Activated T-helper 1 cell treated with anti-CD3 and anti-CD28 coated beads, Interleukin-12 subunit alpha, Interleukin-12 subunit beta, Interleukin-2, Interleukin-4 antibody, amounts not matched to agents 30 ng/mL and 10 ng/mL and 1 ng/mL, durations not matched to agents 14 hours and 24 hours and 36 hours (primary cell): ENCODE measurements at regions of chr14 and their contacts with region 1.

Region 1: GRCh38 chr14:89973234-89973823 is 17.6 kb downstream of the TDP1 start:
- DNase-seq: peak; percentile 25
- H3K4me3 Mint-ChIP-seq: no peak overlapping the region
- H3K27ac Mint-ChIP-seq: no peak overlapping the region
- H3K4me1 Mint-ChIP-seq: peaks cover 5% of the 10 kb centered on the region
- H3K27me3 Mint-ChIP-seq: no peaks in the 10 kb centered on the region

Region 2: DNA sequence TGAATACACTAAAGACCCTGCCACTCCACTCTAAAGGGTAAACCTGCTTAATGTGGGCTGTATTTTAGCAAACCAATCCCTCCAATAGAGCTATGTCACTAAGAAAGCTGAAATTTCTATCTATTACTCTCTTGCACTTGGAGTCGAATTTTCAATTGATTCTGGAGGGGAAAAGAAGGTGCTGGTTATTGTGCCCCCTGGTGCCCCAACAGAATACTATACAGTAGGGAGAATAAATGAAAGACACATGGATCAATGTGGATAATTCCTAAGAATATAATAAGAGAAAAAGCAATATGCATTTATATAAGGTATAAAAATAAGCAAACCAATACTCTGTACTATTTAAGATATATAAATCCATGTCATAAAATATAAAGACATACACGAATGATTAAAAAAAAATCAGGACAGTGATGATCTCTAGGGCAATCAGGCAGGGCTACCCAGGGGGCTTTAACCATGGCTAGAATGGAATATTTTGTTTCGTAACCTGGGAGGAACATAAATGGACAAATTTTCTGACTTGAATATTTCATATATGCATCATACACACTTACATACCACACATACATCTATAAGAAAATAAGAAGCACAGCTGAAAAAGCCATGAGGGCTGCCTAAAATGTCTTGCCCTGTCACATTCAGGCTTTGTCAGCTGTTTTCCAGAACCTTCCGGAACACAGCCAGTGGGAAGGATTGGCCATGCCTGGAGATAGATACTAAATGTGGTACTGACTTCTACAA is 73.2 kb before region 1 on chr14:
- intact Hi-C with region 1: no loop called
- DNase-seq: no peak
- H3K4me3 Mint-ChIP-seq: no peak overlapping the region
- H3K27ac Mint-ChIP-seq: no peak overlapping the region
- H3K4me1 Mint-ChIP-seq: peaks cover 7% of the 10 kb centered on the region
- H3K27me3 Mint-ChIP-seq: peaks cover 5% of the 10 kb centered on the region

Region 3: GRCh38 chr14:90235179-90235976 is 262.0 kb after region 1 on chr14:
- intact Hi-C with region 1: loop called (anchors 1 kb)
- DNase-seq: peak; percentile 59
- H3K4me3 Mint-ChIP-seq: no peak overlapping the region
- H3K27ac Mint-ChIP-seq: no peak overlapping the region
- H3K4me1 Mint-ChIP-seq: no peaks in the 10 kb centered on the region
- H3K27me3 Mint-ChIP-seq: peaks cover 5% of the 10 kb centered on the region